Head of caudate nucleus (tissue), 42 donors: ENCODE measurements at regions of chr12 and their contacts with region 1.

Region 1: GRCh38 chr12:50986966-50987737 is 34.8 kb downstream of the HIGD1C start:
- DNase-seq: peak in 37 of 42 donors; percentile 12 to 84 (median 62)

Region 2: DNA sequence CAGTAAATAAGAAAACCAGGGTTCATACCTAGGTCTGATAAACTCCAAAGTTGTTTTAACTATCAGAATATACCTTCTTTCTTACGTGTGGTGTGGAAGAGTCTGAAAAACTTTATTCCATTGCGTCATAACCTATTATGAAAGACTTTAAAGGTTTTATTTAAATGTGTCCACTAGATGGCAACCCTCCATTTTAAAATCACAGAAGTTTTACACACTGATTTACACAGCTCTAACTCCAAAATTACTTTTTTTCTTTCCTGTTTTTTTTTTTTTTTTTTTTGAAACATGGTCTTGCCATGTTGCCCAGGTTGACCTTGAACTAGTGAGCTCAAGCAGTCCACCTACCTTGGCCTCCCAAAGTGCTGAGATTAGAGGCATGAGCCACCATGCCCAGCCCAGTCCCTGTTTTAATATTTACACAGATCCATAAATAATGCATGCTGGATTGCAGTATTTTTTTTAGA is 161.7 kb before region 1 on chr12:
- intact Hi-C with region 1: loop called (anchors 5 kb)
- DNase-seq: peak in 1 of 42 donors; percentile 7

Region 3: GRCh38 chr12:50924439-50925341 is 62.5 kb before region 1 on chr12:
- intact Hi-C with region 1: loop called (anchors 10 kb)
- DNase-seq: peak; percentile 66 to 96 (median 88)